ENCODE measurements at regions of chr12 and their contacts with region 1.

Region 1: DNA sequence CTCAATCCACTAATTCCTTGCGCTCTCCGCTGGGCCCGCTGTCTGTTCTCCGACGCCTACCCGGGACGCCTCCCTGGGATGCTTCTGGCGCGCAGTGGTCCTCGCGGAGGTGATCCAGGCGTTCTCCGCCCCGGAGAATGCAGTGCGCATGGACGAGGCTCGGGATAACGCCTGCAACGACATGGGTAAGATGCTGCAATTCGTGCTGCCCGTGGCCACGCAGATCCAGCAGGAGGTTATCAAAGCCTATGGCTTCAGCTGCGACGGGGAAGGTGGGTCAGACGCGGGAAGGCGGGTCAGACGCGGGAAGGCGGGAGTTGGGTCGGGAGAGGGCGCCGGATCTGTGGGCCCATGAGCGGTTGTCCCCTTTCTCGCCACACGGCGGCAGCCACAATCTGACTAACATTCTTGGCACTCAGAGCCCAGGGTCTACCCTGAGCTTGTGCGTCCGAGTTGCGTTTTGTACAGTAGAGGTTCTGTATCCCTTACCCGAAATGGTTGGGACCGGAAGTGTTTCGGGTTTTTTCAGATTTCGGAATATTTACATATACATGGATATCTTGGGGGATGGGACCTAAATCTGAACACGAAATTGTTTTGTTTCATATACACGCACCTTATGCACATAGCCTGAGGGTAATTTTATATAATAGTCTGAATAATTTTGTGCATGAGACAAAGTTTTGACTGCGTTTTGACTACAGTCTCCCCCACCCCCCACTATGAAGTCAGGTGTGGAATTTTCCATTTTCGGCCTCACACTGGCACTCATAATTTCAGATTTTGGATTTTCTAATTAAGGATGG is 762 bp downstream of the C12orf57 start:
- DNase-seq: peak; percentile 90 to 97
- H3K4me3 ChIP-seq: peak overlapping the region; percentile 67
- H3K27ac ChIP-seq: peak overlapping the region; percentile 94
- H3K4me1 ChIP-seq: peaks cover 20% of the 10 kb centered on the region
- H3K27me3 ChIP-seq: no peaks in the 10 kb centered on the region
- CTCF ChIP-seq: peak; percentile 88

Region 2: GRCh38 chr12:6752921-6753771 is 191.4 kb before region 1 on chr12 and contains the start of gene MLF2:
- CTCF ChIA-PET with region 1: no interaction called
- POLR2A ChIA-PET with region 1: interaction called, 4 read pairs
- intact Hi-C with region 1: loop called (anchors 5 kb)
- DNase-seq: peak; percentile 95 to 100
- H3K4me3 ChIP-seq: peak within 1 kb of the TSS; percentile 77
- H3K27ac ChIP-seq: peak within 1 kb of the TSS; percentile 83
- H3K4me1 ChIP-seq: peaks cover 16% of the 10 kb centered on the region
- H3K27me3 ChIP-seq: no peaks in the 10 kb centered on the region
- CTCF ChIP-seq: no peak; the same call in 1 of the 2 replicates
- total RNA-seq, gene MLF2: 349 and 379 TPM in 2 replicates

Region 3: DNA sequence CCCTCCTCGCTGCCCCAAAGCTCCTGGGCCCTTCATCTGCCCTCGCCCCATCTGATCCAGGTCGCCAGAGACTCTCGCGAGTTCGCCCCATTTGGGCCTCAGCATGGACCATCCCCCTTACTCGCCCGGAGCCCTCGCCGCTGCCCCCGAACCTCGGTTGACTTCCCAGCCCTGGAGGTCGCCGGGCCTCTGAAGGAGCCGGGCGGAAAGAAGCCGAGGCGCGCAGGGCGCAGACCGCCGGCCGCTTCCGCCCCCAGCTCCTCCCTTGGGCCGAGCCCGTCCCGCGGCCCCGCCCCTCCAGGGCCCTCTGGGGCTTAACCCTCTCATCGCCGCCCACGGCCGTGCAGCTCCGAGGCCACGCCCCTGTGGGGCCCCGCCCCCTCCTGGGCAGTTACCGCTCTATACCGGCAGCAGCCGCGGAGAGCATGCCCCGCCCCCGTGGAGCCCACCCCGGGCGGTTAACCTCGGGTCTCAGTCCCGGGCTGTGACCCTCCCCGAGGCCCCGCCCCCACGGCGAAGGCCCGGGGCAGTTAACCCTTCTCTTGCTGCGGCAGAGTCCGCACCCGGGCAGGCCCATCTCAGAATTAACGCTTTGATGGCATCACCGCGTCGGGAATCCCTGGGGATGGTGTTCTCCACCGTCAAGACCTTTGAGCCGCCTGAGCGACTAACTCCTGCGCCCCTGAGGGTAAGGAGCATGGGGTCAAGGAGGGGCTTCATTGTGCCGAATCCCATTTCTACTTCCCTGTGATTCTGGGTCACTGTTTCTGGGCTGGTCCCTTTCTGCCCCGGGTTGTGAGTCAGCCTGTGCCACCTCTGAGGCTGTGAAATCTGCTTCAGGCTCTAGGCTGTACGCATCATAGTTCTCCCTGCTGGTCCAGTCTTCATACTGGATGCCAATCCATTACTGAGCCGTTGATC is 71.2 kb before region 1 on chr12 and contains the start of gene SPSB2:
- CTCF ChIA-PET with region 1: interaction called, 21 read pairs
- POLR2A ChIA-PET with region 1: interaction called, 20 read pairs
- intact Hi-C with region 1: loop called (anchors 1 kb)
- DNase-seq: peak; percentile 91 to 100
- H3K4me3 ChIP-seq: peak within 1 kb of the TSS; percentile 84
- H3K27ac ChIP-seq: peak within 1 kb of the TSS; percentile 37
- H3K4me1 ChIP-seq: peaks cover 36% of the 10 kb centered on the region
- H3K27me3 ChIP-seq: no peaks in the 10 kb centered on the region
- CTCF ChIP-seq: no peak
- total RNA-seq, gene SPSB2: 28.9 and 30.1 TPM in 2 replicates

Region 4: DNA sequence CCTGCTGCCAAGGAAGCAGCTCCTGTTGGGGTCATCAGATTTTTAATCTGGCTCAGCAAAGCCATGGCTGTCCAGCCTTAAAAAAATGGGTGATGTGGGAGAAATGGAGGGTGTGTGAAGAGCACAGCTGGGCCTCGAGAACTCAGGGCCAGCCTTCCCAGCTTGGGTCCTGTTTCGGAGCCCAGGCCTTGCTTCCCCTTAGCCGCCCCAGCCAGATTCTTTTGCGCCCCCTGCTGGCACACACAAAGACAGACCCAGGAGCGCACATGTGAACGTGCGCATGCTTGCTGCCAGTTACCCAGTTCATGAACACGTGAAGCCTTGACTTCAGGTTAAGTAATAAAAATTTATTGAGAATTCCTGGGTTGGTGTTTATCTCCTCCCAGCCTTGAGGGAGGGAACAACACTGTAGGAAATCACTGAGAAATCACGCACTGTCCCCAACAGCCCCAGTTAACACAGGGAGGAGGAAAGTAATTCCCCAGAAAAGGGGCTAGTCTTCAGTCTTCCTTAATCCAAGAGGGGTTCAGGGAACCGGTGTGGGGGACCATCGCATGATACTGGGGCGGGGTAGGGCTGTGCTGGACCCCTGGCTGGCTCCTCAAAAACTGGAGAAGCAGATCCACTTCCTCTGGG is 20.6 kb after region 1 on chr12:
- CTCF ChIA-PET with region 1: interaction called, 47 read pairs
- POLR2A ChIA-PET with region 1: interaction called, 54 read pairs
- intact Hi-C with region 1: loop called (anchors 1 kb)
- DNase-seq: peak; percentile 88
- H3K4me3 ChIP-seq: peak overlapping the region; percentile 98
- H3K27ac ChIP-seq: peak overlapping the region; percentile 93
- H3K4me1 ChIP-seq: peaks cover 52% of the 10 kb centered on the region
- H3K27me3 ChIP-seq: no peaks in the 10 kb centered on the region
- CTCF ChIP-seq: peak; percentile 99

Region 5: GRCh38 chr12:7031306-7031705 is 86.7 kb after region 1 on chr12:
- CTCF ChIA-PET with region 1: no interaction called
- POLR2A ChIA-PET with region 1: interaction called, 17 read pairs
- intact Hi-C with region 1: no loop called
- DNase-seq: no peak
- H3K4me3 ChIP-seq: no peak overlapping the region
- H3K27ac ChIP-seq: no peak overlapping the region
- H3K4me1 ChIP-seq: no peaks in the 10 kb centered on the region
- H3K27me3 ChIP-seq: no peaks in the 10 kb centered on the region; the same call in 1 of the 2 replicates
- CTCF ChIP-seq: no peak

Region 6: DNA sequence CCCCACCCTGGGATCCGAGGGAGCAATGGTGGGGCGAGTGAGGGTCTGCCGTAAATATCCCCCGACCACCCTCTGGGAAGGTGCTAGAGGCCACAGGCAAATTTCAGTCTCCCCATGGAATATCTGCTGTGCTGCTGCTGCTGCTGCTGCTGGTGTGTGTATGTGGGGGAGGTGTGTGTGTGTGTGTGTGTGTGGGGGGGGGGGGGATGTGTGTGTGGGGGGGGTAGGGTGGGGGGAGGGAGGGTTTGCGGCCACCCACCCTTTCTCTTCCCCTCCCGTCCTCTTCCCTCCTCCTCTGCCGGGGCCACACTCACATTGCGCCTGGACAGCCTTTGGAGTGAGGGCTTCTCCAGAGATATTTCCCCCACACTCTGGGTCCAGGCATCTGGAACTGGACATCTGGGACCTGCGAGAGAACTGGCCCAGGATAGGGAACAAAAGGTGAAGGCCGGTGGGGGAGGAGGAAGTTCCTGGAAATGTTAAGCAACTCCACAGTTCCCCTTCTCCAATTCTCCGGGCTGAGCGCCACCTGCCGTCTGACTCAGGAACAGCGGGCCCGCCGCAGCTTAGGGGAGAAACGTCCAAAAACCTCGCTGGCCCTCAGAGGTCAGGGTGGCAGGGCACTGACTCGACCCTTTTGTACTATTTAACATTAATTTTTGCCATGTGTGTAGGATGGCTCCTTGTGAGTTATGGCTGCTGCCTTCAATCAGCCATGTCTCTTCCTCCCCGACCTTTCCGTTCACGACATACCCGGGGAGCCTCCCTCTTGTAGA is 164.4 kb after region 1 on chr12 and contains the start of gene C1RL:
- CTCF ChIA-PET with region 1: interaction called, 15 read pairs
- POLR2A ChIA-PET with region 1: interaction called, 27 read pairs
- intact Hi-C with region 1: loop called (anchors 1 kb)
- DNase-seq: peak; percentile 72 to 91
- H3K4me3 ChIP-seq: peak within 1 kb of the TSS; percentile 79
- H3K27ac ChIP-seq: peak within 1 kb of the TSS; percentile 76
- H3K4me1 ChIP-seq: peaks cover 28% of the 10 kb centered on the region
- H3K27me3 ChIP-seq: no peaks in the 10 kb centered on the region
- CTCF ChIP-seq: peak; percentile 97
- total RNA-seq, gene C1RL: 70.4 and 72.9 TPM in 2 replicates

Region 7: GRCh38 chr12:7638760-7639555 is 694.4 kb after region 1 on chr12:
- CTCF ChIA-PET with region 1: no interaction called
- POLR2A ChIA-PET with region 1: no interaction called
- intact Hi-C with region 1: loop called (anchors 1 kb)
- DNase-seq: peak; percentile 66 to 75
- H3K4me3 ChIP-seq: no peak overlapping the region
- H3K27ac ChIP-seq: no peak overlapping the region
- H3K4me1 ChIP-seq: no peaks in the 10 kb centered on the region
- H3K27me3 ChIP-seq: no peaks in the 10 kb centered on the region
- CTCF ChIP-seq: peak; percentile 96

Measured in PC-9 (cell line).